WTC11 (cell line): ENCODE measurements at regions of chr17 and their contacts with region 1.

Region 1: DNA sequence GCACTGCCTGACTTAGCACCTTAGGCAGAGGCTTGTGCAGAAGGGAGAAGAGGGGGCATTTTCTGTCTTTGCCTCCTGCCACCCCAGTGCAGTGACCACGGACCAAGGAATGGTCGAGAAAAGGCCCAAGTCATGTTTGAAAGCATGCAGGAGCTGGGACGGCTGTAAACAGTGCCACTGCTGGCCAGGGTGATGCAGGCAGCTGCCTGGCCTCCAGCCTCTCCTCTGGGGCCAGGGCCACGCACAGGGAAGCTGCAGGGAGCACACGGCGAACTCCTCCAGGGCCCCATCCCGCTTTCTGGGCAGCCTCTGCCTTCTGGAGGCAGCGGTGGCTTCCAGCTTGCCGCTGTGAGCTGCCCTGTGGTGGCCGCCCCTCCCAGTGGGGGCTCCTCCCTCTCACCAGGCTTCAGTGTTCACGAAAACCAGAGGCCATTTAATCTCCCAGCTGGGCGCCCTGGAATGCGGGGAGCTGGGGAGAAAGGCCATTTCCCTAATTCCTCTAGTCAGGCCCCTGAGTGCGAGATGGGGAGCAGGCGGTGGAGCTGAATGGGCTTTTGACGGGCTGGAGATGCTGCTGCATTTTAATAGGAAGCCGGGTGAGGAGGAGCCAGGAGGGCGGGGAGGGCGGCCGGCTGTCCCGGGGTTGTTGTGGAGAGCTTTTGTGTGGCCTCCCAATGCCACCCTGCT is 28.7 kb upstream of the DNAI2 start:
- DNase-seq: peak; percentile 69
- ATAC-seq: peak; percentile 77
- H3K4me3 Mint-ChIP-seq: peak overlapping the region; percentile 40; the same call in 1 of the 2 replicates
- H3K27ac Mint-ChIP-seq: no peak overlapping the region
- H3K4me1 Mint-ChIP-seq: peaks cover 19% of the 10 kb centered on the region
- H3K27me3 Mint-ChIP-seq: peaks cover 7% of the 10 kb centered on the region
- CTCF ChIP-seq: no peak

Region 2: GRCh38 chr17:74212913-74213791 is 32.1 kb before region 1 on chr17 and contains the start of gene TTYH2:
- CTCF ChIA-PET with region 1: interaction called, 18 read pairs
- POLR2A ChIA-PET with region 1: interaction called, 5 read pairs
- DNase-seq: peak; percentile 74
- ATAC-seq: peak; percentile 34
- H3K4me3 Mint-ChIP-seq: peak within 1 kb of the TSS; percentile 93
- H3K27ac Mint-ChIP-seq: peak within 1 kb of the TSS; percentile 65
- H3K4me1 Mint-ChIP-seq: peaks cover 45% of the 10 kb centered on the region
- H3K27me3 Mint-ChIP-seq: peaks cover 37% of the 10 kb centered on the region
- CTCF ChIP-seq: no peak
- total RNA-seq, gene TTYH2: 3.5 to 5.1 TPM (median 4.5 TPM) in 3 replicates

Region 3: GRCh38 chr17:74259667-74260524 is 14.6 kb after region 1 on chr17:
- CTCF ChIA-PET with region 1: interaction called, 17 read pairs
- POLR2A ChIA-PET with region 1: no interaction called
- DNase-seq: peak; percentile 22
- ATAC-seq: peak; percentile 65
- H3K4me3 Mint-ChIP-seq: peak overlapping the region; percentile 31; the same call in 1 of the 2 replicates
- H3K27ac Mint-ChIP-seq: peak overlapping the region; percentile 60; the same call in 1 of the 2 replicates
- H3K4me1 Mint-ChIP-seq: peaks cover 18% of the 10 kb centered on the region
- H3K27me3 Mint-ChIP-seq: no peaks in the 10 kb centered on the region; the same call in 1 of the 2 replicates
- CTCF ChIP-seq: no peak

Region 4: DNA sequence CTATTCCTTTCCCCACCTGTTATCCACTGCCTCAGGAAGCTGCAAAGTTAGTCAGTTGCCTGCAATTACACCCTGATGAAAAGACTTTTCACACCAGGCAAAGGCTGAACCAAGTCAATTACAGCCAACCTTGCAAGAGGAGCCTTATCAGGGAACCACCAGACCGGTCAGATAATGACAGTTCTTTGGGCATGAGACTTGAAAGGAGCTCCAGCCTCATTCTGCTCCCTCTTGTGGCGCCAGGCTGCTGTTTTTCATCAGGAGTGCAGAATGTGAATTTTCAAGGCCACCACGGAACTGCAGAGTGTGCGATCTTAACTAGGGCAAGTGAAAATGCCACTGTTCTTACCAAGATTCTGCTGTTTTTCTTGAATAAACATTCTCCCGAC is 51.3 kb after region 1 on chr17:
- CTCF ChIA-PET with region 1: interaction called, 10 read pairs
- POLR2A ChIA-PET with region 1: no interaction called
- DNase-seq: peak; percentile 56
- ATAC-seq: peak; percentile 74
- H3K4me3 Mint-ChIP-seq: no peak overlapping the region
- H3K27ac Mint-ChIP-seq: no peak overlapping the region
- H3K4me1 Mint-ChIP-seq: no peaks in the 10 kb centered on the region
- H3K27me3 Mint-ChIP-seq: peaks cover 2% of the 10 kb centered on the region; the same call in 1 of the 2 replicates
- CTCF ChIP-seq: no peak; the same call in 1 of the 2 replicates

Region 5: DNA sequence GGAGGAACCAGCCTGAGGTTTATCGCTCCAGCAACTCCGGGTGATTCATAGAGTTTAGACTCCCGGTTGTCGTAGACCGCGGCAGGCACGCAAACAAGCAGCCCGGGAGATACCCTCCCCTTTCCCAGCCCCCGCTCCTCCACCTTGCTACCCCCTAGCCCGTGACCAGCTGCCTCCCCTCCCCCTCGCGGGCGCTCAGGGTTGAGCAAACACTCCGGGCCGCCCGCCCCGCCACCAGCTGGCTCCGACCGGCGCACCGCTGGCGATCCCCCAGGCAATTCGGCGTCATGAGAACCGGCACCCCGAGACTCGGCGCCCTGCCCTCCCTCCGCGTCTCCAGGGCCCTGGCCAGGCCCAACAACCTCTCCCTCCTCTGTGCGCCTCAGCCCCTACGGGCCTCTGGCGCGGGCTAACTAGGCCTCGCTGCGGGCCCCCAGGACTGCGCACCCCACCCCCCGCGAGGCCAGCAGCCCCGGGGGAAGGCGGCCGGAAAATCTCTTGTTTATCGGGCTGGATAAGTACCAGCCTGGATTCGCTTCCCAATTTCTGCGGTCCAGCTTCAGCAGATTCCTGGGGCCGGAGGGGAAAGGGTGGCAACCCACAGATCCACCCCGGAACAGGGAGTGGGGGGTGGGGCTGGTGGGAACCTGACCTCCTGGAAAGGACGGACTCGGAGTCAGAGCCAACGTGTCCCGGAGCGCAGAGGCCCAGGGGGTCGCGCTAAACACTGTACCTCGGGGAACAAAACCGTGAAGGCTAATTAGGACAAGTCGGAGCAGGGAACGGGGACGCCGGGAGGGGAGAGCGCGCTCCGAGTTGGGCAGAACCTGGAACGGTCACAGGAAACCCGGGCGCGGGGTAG is 185.6 kb after region 1 on chr17:
- CTCF ChIA-PET with region 1: no interaction called
- POLR2A ChIA-PET with region 1: no interaction called
- DNase-seq: peak; percentile 77
- ATAC-seq: peak; percentile 7
- H3K4me3 Mint-ChIP-seq: peak overlapping the region; percentile 84
- H3K27ac Mint-ChIP-seq: peak overlapping the region; percentile 53
- H3K4me1 Mint-ChIP-seq: peaks cover 39% of the 10 kb centered on the region
- H3K27me3 Mint-ChIP-seq: peaks cover 37% of the 10 kb centered on the region
- CTCF ChIP-seq: no peak